ENCODE measurements at regions of chr6 and their contacts with region 1.

Region 1: DNA sequence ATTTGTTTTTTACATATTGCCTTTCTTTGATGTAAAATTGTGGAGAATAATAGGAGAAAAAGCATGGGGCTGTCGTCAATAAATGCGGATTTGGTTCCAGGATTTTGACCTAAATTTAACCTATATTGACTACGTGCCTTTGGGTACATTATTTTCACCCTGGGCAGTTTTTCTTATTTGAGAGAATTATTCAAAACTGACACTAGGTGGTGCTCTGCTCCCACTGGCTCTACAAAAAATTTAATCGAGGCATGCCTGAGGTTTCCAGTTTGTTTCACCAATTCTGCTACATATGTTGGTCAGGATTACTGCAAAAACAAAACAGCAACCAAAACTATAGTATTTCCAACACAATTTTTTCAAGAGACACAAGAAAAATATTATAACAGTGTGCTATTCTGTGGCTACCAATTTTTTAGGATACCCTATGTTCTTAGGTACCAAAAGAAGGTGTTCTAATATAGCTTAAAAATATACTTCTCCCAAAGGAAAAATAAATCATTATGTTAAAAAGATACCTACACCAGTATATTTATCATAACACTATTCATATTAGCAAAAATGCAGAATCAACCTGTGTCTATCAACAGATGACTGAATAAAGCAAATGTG is 48.6 kb upstream of the FABP7 start:
- DNase-seq: peak in 3 of 4 experiments; percentile 31 to 57 (median 32)
- ATAC-seq: peak; percentile 74
- H3K4me3 ChIP-seq: no peak overlapping the region
- H3K27ac ChIP-seq: no peak overlapping the region
- H3K4me1 ChIP-seq: no peaks in the 10 kb centered on the region
- H3K27me3 ChIP-seq: no peaks in the 10 kb centered on the region
- CTCF ChIP-seq: peak; percentile 57 to 82 (median 59)
- EP300 ChIP-seq: no peak
- POLR2A ChIP-seq: no peak
- RAD21 ChIP-seq: peak; percentile 81 to 83

Region 2: GRCh38 chr6:122381497-122382265 is 349.2 kb before region 1 on chr6:
- CTCF ChIA-PET with region 1: no interaction called
- POLR2A ChIA-PET with region 1: no interaction called
- in situ Hi-C with region 1: no loop called
- intact Hi-C with region 1: loop called (anchors 5 kb)
- DNase-seq: peak; percentile 56 to 77 (median 58)
- ATAC-seq: peak; percentile 99
- H3K4me3 ChIP-seq: no peak overlapping the region
- H3K27ac ChIP-seq: no peak overlapping the region
- H3K4me1 ChIP-seq: no peaks in the 10 kb centered on the region
- H3K27me3 ChIP-seq: no peaks in the 10 kb centered on the region
- CTCF ChIP-seq: peak; percentile 70 to 78 (median 78)
- EP300 ChIP-seq: no peak
- POLR2A ChIP-seq: no peak
- RAD21 ChIP-seq: peak; percentile 70 to 85

Region 3: DNA sequence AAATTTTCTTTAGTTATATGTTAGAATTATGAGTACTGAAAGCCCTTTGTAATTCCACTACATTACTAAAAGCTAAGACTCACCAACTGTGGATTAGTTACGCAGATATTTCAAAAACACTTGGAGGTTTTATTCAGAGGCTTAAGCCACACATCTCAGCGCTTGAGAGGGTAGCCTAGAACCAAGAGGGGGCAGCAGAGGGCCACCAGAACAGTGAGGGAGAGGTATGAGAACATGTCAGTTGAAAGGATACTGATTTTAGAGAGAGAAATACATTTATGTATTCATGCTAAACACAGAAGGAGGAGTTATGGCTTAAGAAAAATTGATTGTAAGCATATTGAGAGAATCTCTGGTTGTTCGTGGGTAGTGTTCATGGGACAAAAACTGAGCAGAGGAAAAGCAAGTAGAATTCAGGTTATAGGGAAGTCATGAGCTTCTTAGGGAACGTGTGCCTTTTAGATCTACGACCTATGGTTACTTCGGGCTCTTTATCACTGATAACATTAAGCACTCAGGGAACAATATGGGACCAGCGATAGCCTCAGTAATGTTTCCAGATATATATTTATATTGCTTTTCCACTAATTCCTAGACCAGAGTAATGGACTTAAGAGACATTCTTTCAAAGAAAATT is 238.8 kb before region 1 on chr6:
- CTCF ChIA-PET with region 1: no interaction called
- POLR2A ChIA-PET with region 1: no interaction called
- in situ Hi-C with region 1: loop called (anchors 10 kb)
- intact Hi-C with region 1: loop called (anchors 5 kb)
- DNase-seq: peak; percentile 58 to 82 (median 64)
- ATAC-seq: peak; percentile 99
- H3K4me3 ChIP-seq: no peak overlapping the region
- H3K27ac ChIP-seq: no peak overlapping the region
- H3K4me1 ChIP-seq: no peaks in the 10 kb centered on the region; a peak in 1 of 5 replicates
- H3K27me3 ChIP-seq: no peaks in the 10 kb centered on the region
- CTCF ChIP-seq: peak; percentile 64 to 77 (median 75)
- EP300 ChIP-seq: no peak
- POLR2A ChIP-seq: no peak
- RAD21 ChIP-seq: peak; percentile 45 to 74; a peak in 3 of 4 replicates

Region 4: GRCh38 chr6:122609856-122610689 is 120.8 kb before region 1 on chr6 and contains the start of gene PKIB:
- CTCF ChIA-PET with region 1: no interaction called
- POLR2A ChIA-PET with region 1: no interaction called
- in situ Hi-C with region 1: no loop called
- intact Hi-C with region 1: loop called (anchors 5 kb)
- DNase-seq: peak; percentile 22 to 56 (median 38)
- ATAC-seq: peak; percentile 99
- H3K4me3 ChIP-seq: peak within 1 kb of the TSS; percentile 30
- H3K27ac ChIP-seq: no peak within 1 kb of the TSS
- H3K4me1 ChIP-seq: peaks cover 2 to 13% of the 10 kb centered on the region in 2 experiments; a peak in 3 of 5 replicates
- H3K27me3 ChIP-seq: no peaks in the 10 kb centered on the region; a peak in 1 of 5 replicates
- CTCF ChIP-seq: peak; percentile 33 to 92 (median 37); a peak in 4 of 6 replicates
- EP300 ChIP-seq: no peak
- POLR2A ChIP-seq: no peak
- RAD21 ChIP-seq: 0 out of 4 replicates have a peak, but pooled peaks of 1 of the 2 experiments have one; percentile 11
- polyA plus RNA-seq, gene PKIB: 26.6 to 27.4 TPM

Region 5: GRCh38 chr6:122789182-122790027 is 58.5 kb after region 1 on chr6 and contains the start of gene SMPDL3A:
- CTCF ChIA-PET with region 1: no interaction called
- POLR2A ChIA-PET with region 1: no interaction called
- in situ Hi-C with region 1: no loop called
- intact Hi-C with region 1: no loop called
- DNase-seq: peak; percentile 55 to 63 (median 58)
- ATAC-seq: peak; percentile 89
- H3K4me3 ChIP-seq: peak within 1 kb of the TSS; percentile 70
- H3K27ac ChIP-seq: peak within 1 kb of the TSS; percentile 39
- H3K4me1 ChIP-seq: peaks cover 6 to 9% of the 10 kb centered on the region in 2 experiments; a peak in 4 of 5 replicates
- H3K27me3 ChIP-seq: peaks cover 2 to 11% of the 10 kb centered on the region in 2 experiments; a peak in 3 of 5 replicates
- CTCF ChIP-seq: peak; percentile 28 to 54 (median 40); a peak in 4 of 6 replicates
- EP300 ChIP-seq: no peak
- POLR2A ChIP-seq: 0 out of 2 replicates have a peak, but pooled peaks have one; percentile 31
- RAD21 ChIP-seq: no peak
- polyA plus RNA-seq, gene SMPDL3A: 0.14 to 0.27 TPM

Region 6: GRCh38 chr6:123316733-123317323 is 585.9 kb after region 1 on chr6:
- CTCF ChIA-PET with region 1: interaction called, 3 read pairs
- POLR2A ChIA-PET with region 1: no interaction called
- in situ Hi-C with region 1: loop called (anchors 25 kb)
- intact Hi-C with region 1: loop called (anchors 1 kb)
- DNase-seq: peak; percentile 9 to 22 (median 19)
- ATAC-seq: no peak
- H3K4me3 ChIP-seq: no peak overlapping the region
- H3K27ac ChIP-seq: no peak overlapping the region
- H3K4me1 ChIP-seq: no peaks in the 10 kb centered on the region
- H3K27me3 ChIP-seq: no peaks in the 10 kb centered on the region
- CTCF ChIP-seq: peak in 2 of 3 experiments; percentile 21 to 52; a peak in 3 of 6 replicates
- EP300 ChIP-seq: no peak
- POLR2A ChIP-seq: no peak
- RAD21 ChIP-seq: peak; percentile 42 to 57

Region 7: GRCh38 chr6:123715006-123715875 is 984.4 kb after region 1 on chr6:
- CTCF ChIA-PET with region 1: no interaction called
- POLR2A ChIA-PET with region 1: no interaction called
- in situ Hi-C with region 1: no loop called
- intact Hi-C with region 1: loop called (anchors 5 kb)
- DNase-seq: peak in 3 of 4 experiments; percentile 7 to 31 (median 8)
- ATAC-seq: peak; percentile 53; the same call in 2 of the 3 replicates
- H3K4me3 ChIP-seq: no peak overlapping the region
- H3K27ac ChIP-seq: no peak overlapping the region
- H3K4me1 ChIP-seq: no peaks in the 10 kb centered on the region; a peak in 1 of 5 replicates
- H3K27me3 ChIP-seq: no peaks in the 10 kb centered on the region
- CTCF ChIP-seq: peak; percentile 35 to 52 (median 35); a peak in 3 of 6 replicates
- EP300 ChIP-seq: no peak
- POLR2A ChIP-seq: no peak
- RAD21 ChIP-seq: peak; percentile 75 to 83

Measured in K562 (cell line).